CD8-positive, alpha-beta T cell (primary cell): ENCODE measurements at regions of chr5 and their contacts with region 1.

Region 1: DNA sequence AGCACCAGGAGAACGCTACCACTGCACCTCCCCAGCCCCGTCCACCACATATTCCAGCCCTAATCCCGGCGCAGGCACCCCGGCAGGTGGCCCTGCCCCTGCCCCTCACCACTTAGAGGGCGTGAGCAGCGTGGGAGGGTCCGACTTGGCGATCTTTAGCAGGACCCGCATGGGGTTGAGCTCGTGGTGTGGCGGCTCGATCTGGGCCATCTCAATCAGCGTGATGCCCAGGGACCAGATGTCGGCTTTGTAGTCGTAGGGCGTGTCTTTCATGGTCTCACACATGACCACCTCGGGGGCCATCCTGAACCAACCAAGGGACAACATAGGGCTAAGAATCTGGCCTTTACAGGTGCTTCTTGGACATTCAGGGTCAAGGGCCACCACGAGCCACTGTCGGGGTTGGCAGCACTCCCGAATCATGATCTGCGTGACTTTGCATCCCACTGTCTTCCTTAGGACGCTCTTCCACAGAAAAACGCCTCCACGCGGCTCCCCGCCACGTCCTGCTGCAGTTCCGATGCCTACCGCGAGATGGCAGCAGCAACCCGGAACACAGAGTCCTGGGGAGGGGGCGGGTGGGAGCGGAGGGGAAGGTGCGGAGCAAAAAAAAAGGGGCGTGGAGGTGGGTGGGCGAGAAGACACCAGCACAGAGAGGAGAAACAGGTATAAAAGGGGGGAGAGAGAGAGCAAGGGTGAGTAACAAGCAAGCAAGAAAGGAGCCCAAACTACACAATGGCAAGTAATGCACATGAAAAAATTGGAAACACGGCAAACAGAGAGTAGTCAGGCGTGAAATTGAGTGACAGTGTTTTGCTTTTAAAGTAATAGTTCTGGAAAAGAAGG is 81.3 kb downstream of the STK10 start:
- DNase-seq: peak; percentile 31 to 81 (median 69)
- ATAC-seq: peak; percentile 42
- H3K4me3 ChIP-seq: no peak overlapping the region
- H3K4me3 Mint-ChIP-seq: peak overlapping the region; percentile 8
- H3K27ac ChIP-seq: peak overlapping the region in 1 of 2 experiments; percentile 51
- H3K27ac Mint-ChIP-seq: peak overlapping the region; percentile 84
- H3K4me1 ChIP-seq: peaks cover 36% of the 10 kb centered on the region
- H3K4me1 Mint-ChIP-seq: peaks cover 48% of the 10 kb centered on the region
- H3K27me3 ChIP-seq: no peaks in the 10 kb centered on the region
- H3K27me3 Mint-ChIP-seq: no peaks in the 10 kb centered on the region
- CTCF ChIP-seq: peak; percentile 98

Region 2: GRCh38 chr5:171387345-171387969 is 719.3 kb before region 1 on chr5 and contains the start of gene NPM1:
- CTCF ChIA-PET with region 1: no interaction called
- POLR2A ChIA-PET with region 1: no interaction called
- intact Hi-C with region 1: loop called in 1 of 2 experiments (anchors 5 kb)
- DNase-seq: peak; percentile 95 to 100 (median 97)
- ATAC-seq: peak; percentile 88
- H3K4me3 ChIP-seq: peak within 1 kb of the TSS; percentile 92 to 96
- H3K4me3 Mint-ChIP-seq: peak within 1 kb of the TSS; percentile 96
- H3K27ac ChIP-seq: peak within 1 kb of the TSS; percentile 94 to 97
- H3K27ac Mint-ChIP-seq: peak within 1 kb of the TSS; percentile 99
- H3K4me1 ChIP-seq: peaks cover 45% of the 10 kb centered on the region
- H3K4me1 Mint-ChIP-seq: peaks cover 46% of the 10 kb centered on the region
- H3K27me3 ChIP-seq: no peaks in the 10 kb centered on the region
- H3K27me3 Mint-ChIP-seq: peaks cover 3% of the 10 kb centered on the region
- CTCF ChIP-seq: no peak
- total RNA-seq, gene NPM1: 1,297 to 1,299 TPM

Region 3: DNA sequence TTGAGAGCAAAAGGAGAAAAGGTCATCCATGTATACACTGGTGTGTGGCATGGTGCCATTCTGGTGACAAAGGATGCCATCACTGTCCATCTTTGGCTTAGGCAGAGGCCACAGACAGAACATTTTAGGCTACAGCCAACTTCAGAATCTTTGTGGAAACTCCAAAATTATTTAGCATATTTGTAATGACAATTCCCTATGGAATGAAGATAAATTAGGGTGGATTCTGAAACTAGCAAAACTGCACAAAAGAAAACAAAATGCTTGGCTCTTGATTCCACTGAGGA is 192.8 kb before region 1 on chr5:
- CTCF ChIA-PET with region 1: interaction called, 11 read pairs
- POLR2A ChIA-PET with region 1: no interaction called
- intact Hi-C with region 1: loop called in 1 of 2 experiments (anchors 1 kb)
- DNase-seq: no peak
- ATAC-seq: no peak
- H3K4me3 ChIP-seq: no peak overlapping the region
- H3K4me3 Mint-ChIP-seq: no peak overlapping the region
- H3K27ac ChIP-seq: no peak overlapping the region
- H3K27ac Mint-ChIP-seq: peak overlapping the region; percentile 7
- H3K4me1 ChIP-seq: peaks cover 9% of the 10 kb centered on the region
- H3K4me1 Mint-ChIP-seq: peaks cover 45% of the 10 kb centered on the region
- H3K27me3 ChIP-seq: no peaks in the 10 kb centered on the region
- H3K27me3 Mint-ChIP-seq: no peaks in the 10 kb centered on the region
- CTCF ChIP-seq: no peak

Region 4: DNA sequence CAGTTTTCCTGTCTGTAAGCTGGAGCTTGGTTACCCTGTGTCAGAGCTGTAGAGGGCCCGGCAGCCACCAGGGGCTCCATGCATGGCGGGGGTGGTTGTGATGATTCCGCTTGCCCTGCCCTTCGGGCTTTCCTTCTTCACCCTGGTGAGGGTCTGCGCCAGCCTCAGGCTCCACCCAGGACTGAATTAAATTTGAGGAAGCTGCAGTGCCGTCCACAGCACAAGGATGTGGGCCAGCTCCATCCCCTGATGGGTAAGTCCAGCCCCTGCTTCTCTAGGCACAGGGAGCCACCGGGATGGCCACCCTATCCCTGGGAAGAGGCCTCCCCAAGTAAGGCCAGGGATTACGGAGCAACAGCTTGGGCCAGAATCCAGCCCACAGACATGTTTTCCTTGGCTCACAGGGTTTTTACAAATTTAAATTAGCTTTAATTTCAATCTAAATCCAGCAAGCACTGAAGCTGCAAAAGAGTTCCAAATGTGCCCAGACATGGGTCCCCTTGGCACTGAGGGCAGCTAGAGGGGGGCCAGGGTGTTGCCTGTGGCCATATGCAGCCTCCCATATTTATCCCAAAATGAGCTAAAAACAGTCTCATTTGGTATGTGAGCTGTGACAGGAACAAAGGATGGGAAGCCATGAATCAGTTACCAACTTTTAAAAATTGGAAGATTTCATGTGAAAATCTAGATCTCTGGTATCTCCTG is 11.1 kb before region 1 on chr5:
- CTCF ChIA-PET with region 1: interaction called, 11 read pairs
- POLR2A ChIA-PET with region 1: no interaction called
- intact Hi-C with region 1: no loop called
- DNase-seq: no peak
- ATAC-seq: no peak
- H3K4me3 ChIP-seq: no peak overlapping the region
- H3K4me3 Mint-ChIP-seq: no peak overlapping the region
- H3K27ac ChIP-seq: no peak overlapping the region
- H3K27ac Mint-ChIP-seq: no peak overlapping the region
- H3K4me1 ChIP-seq: peaks cover 3% of the 10 kb centered on the region
- H3K4me1 Mint-ChIP-seq: peaks cover 10% of the 10 kb centered on the region
- H3K27me3 ChIP-seq: no peaks in the 10 kb centered on the region
- H3K27me3 Mint-ChIP-seq: no peaks in the 10 kb centered on the region
- CTCF ChIP-seq: no peak

Region 5: DNA sequence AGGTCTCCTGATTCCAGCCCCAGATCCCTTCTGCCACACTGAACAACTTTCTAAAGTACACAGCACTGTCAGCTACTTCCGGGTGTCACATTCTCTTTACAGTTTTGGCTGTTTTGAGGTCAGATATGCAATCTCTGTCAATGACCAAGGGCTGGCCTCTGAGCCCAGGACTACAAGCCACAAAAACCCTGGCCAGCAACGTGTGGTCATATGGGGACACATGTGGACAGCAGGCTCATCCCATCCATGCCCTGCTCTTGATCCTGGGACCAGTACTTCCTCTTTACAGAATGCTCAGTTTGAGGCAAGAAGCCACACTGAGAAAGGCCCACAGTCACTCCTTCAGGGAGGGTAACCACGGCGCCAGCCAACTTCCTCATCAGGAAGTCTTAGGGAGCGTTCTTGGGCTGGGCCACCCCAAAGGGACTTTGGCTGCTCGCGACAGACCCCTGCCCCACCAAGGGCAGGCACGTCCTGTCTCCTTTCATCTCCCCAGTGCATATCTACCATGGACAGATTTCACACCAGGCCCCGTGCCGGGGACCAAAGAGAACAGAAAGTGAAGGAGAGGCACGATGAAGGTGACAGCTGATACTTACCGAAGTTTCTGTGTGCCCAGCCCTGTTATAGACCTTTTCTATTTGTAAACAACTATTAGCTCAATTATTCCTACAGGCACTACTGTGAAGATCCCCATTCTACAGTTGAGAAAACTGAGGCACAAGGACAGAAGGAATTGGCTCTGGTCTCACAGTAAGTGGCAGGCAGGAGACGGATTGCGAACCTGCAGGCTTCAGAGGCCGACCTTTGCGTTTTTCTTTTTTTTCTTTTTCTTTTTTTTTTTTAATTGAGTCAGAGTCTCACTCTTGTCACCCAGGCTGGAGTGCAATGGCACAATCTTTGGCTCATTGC is 44.0 kb after region 1 on chr5:
- CTCF ChIA-PET with region 1: interaction called, 4 read pairs
- POLR2A ChIA-PET with region 1: no interaction called
- intact Hi-C with region 1: loop called in 1 of 2 experiments (anchors 2 kb)
- DNase-seq: peak in 6 of 9 experiments; percentile 7 to 61 (median 36)
- ATAC-seq: peak; percentile 58
- H3K4me3 ChIP-seq: peak overlapping the region; percentile 9 to 36
- H3K4me3 Mint-ChIP-seq: peak overlapping the region; percentile 48
- H3K27ac ChIP-seq: peak overlapping the region; percentile 40 to 82
- H3K27ac Mint-ChIP-seq: peak overlapping the region; percentile 86
- H3K4me1 ChIP-seq: peaks cover 71% of the 10 kb centered on the region
- H3K4me1 Mint-ChIP-seq: peaks cover 84% of the 10 kb centered on the region
- H3K27me3 ChIP-seq: no peaks in the 10 kb centered on the region
- H3K27me3 Mint-ChIP-seq: no peaks in the 10 kb centered on the region
- CTCF ChIP-seq: no peak

Region 6: DNA sequence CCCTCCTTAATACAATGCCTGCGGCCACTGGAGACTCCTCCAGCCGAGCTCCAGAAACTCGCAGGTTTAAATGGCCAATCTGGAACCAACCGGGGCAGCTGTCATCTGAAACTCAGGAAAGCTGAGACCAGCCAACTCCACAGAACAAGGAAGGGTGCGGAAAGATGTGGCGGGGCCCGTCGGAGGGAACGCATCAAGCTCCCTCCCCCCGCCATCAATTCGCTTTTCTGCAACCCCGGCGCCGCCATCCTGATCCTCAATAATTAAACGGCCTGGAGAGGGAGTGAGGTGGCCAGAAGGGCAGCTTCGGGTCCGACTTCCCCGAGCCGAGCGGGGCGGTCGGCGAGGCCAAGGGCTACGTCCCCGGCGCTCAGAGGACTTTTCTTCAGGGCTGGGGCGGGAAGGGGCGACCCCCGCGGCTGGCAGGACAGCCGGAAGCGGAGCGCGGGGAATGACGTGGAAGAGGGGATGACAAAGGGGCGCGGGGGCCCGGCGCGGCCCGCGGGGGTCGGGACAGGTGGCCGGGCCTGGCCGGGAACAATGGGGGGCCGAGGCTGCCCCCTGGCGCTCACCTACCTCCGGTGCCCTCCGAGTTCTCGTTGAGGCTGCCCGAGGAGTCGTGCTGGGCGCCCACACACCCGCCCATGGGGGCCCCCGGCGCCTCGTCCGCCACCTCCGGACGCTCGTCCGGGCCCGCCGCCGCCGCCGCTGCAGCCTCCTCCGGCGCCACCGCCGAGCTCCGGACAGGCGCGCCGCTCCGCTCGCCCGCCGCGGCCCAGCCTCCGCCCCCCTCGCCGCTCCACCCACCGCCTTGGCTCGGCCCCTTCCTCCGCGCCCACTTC is 176.5 kb after region 1 on chr5 and contains the start of gene UBTD2:
- CTCF ChIA-PET with region 1: interaction called, 6 read pairs
- POLR2A ChIA-PET with region 1: no interaction called
- intact Hi-C with region 1: loop called (anchors 2 kb)
- DNase-seq: peak; percentile 44 to 85 (median 70)
- ATAC-seq: peak; percentile 76
- H3K4me3 ChIP-seq: peak within 1 kb of the TSS; percentile 76 to 78
- H3K4me3 Mint-ChIP-seq: peak within 1 kb of the TSS; percentile 88
- H3K27ac ChIP-seq: no peak within 1 kb of the TSS
- H3K27ac Mint-ChIP-seq: peak within 1 kb of the TSS; percentile 77
- H3K4me1 ChIP-seq: peaks cover 18% of the 10 kb centered on the region
- H3K4me1 Mint-ChIP-seq: peaks cover 26% of the 10 kb centered on the region
- H3K27me3 ChIP-seq: no peaks in the 10 kb centered on the region
- H3K27me3 Mint-ChIP-seq: no peaks in the 10 kb centered on the region
- CTCF ChIP-seq: peak; percentile 61
- total RNA-seq, gene UBTD2: 0.78 to 0.79 TPM

Region 7: GRCh38 chr5:172697123-172698121 is 590.7 kb after region 1 on chr5:
- CTCF ChIA-PET with region 1: no interaction called
- POLR2A ChIA-PET with region 1: no interaction called
- intact Hi-C with region 1: loop called in 1 of 2 experiments (anchors 5 kb)
- DNase-seq: peak; percentile 67 to 92 (median 84)
- ATAC-seq: peak; percentile 98
- H3K4me3 ChIP-seq: peak overlapping the region; percentile 64 to 90
- H3K4me3 Mint-ChIP-seq: peak overlapping the region; percentile 93
- H3K27ac ChIP-seq: peak overlapping the region; percentile 43 to 81
- H3K27ac Mint-ChIP-seq: peak overlapping the region; percentile 92
- H3K4me1 ChIP-seq: peaks cover 10% of the 10 kb centered on the region
- H3K4me1 Mint-ChIP-seq: peaks cover 22% of the 10 kb centered on the region
- H3K27me3 ChIP-seq: peaks cover 0 to 3% of the 10 kb centered on the region in 2 experiments
- H3K27me3 Mint-ChIP-seq: peaks cover 16% of the 10 kb centered on the region
- CTCF ChIP-seq: peak; percentile 81